ENCODE measurements at regions of chr19 and their contacts with region 1.

Region 1: DNA sequence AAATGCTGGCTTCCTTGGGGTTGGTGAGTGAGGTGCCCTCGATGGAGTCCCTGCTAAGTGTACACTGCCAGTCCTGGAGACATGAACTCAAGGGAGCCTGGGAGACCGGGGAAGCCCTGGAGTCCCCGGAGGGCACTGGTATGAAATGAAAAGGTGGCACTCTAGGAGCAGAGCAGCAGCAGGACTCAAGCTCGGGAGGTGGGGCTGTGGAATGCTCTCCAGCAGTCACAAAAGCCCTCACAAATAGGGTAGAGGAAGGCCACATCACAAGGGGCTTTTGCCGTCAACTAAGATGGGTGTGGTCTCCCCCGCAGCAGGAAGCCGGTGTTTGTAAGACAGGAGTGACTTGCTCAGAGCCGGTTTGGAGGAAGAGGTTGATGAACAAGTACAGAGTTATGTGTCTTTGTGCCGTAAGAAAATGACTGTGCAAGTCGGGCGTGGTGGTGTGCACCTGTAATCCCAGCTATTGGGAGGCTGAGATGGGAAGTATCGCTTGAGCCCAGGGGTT is 19.3 kb downstream of the CCNE1 start:
- DNase-seq: peak; percentile 23 to 90 (median 86)
- ATAC-seq: peak; percentile 98
- H3K4me3 ChIP-seq: peak overlapping the region; percentile 32
- H3K4me3 Mint-ChIP-seq: peak overlapping the region; percentile 79 to 88 (median 81)
- H3K27ac ChIP-seq: peak overlapping the region; percentile 81
- H3K27ac Mint-ChIP-seq: peak overlapping the region; percentile 96 to 100 (median 98)
- H3K4me1 ChIP-seq: peaks cover 13 to 41% of the 10 kb centered on the region in 2 donors
- H3K4me1 Mint-ChIP-seq: peaks cover 31 to 56% (median 52%) of the 10 kb centered on the region in 7 donors
- H3K27me3 ChIP-seq: no peaks in the 10 kb centered on the region
- H3K27me3 Mint-ChIP-seq: no peaks in the 10 kb centered on the region

Region 2: GRCh38 chr19:29811125-29812079 is 19.7 kb before region 1 on chr19 and contains the start of gene CCNE1:
- CTCF ChIA-PET with region 1: interaction called, 4 read pairs
- POLR2A ChIA-PET with region 1: interaction called, 23 read pairs
- intact Hi-C with region 1: loop called (anchors 1 kb)
- DNase-seq: peak; percentile 85 to 98 (median 91)
- ATAC-seq: peak; percentile 98
- H3K4me3 ChIP-seq: peak within 1 kb of the TSS; percentile 48
- H3K4me3 Mint-ChIP-seq: peak within 1 kb of the TSS; percentile 83 to 96 (median 90)
- H3K27ac ChIP-seq: peak within 1 kb of the TSS; percentile 69
- H3K27ac Mint-ChIP-seq: peak within 1 kb of the TSS; percentile 56 to 94 (median 85)
- H3K4me1 ChIP-seq: no peaks in the 10 kb centered on the region
- H3K4me1 Mint-ChIP-seq: peaks cover 0 to 36% (median 11%) of the 10 kb centered on the region in 7 donors
- H3K27me3 ChIP-seq: no peaks in the 10 kb centered on the region
- H3K27me3 Mint-ChIP-seq: no peaks in the 10 kb centered on the region
- total RNA-seq, gene CCNE1: 5.3 to 36.1 (median 6.6) TPM

Region 3: DNA sequence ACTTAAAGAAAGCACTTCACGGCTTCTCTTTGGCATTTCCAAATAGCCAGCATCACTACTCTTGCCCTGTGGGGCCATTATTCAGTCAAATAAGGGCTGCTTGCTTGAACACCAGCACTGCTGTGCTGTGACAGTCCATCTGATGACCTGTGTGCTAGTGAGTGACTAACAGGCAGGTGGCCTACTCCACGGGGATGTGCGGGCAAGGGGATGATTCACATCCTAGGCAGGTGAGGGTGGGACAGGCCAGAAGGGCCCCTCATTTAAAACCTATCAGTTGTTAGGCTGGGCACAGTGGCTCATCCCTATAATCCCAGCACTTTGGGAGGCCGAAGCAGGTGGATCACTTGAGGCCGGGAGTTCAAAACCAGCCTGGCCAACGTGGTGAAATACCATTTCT is 11.1 kb before region 1 on chr19:
- CTCF ChIA-PET with region 1: interaction called, 3 read pairs
- POLR2A ChIA-PET with region 1: interaction called, 34 read pairs
- intact Hi-C with region 1: no loop called
- DNase-seq: no peak
- ATAC-seq: no peak
- H3K4me3 ChIP-seq: no peak overlapping the region
- H3K4me3 Mint-ChIP-seq: no peak overlapping the region
- H3K27ac ChIP-seq: no peak overlapping the region
- H3K27ac Mint-ChIP-seq: no peak overlapping the region
- H3K4me1 ChIP-seq: no peaks in the 10 kb centered on the region
- H3K4me1 Mint-ChIP-seq: peaks cover 0 to 8% (median 0%) of the 10 kb centered on the region in 7 donors
- H3K27me3 ChIP-seq: no peaks in the 10 kb centered on the region
- H3K27me3 Mint-ChIP-seq: no peaks in the 10 kb centered on the region